Activated CD8-positive, alpha-beta T cell treated with anti-CD3 and anti-CD28 coated beads for 36 hours (primary cell): ENCODE measurements at regions of chr10 and their contacts with region 1.

Region 1: GRCh38 chr10:94320285-94320914 is 42.3 kb downstream of the NOC3L start:
- DNase-seq: peak; percentile 82
- ATAC-seq: peak; percentile 61
- H3K4me3 Mint-ChIP-seq: no peak overlapping the region
- H3K27ac Mint-ChIP-seq: no peak overlapping the region
- H3K4me1 Mint-ChIP-seq: peaks cover 3% of the 10 kb centered on the region
- H3K27me3 Mint-ChIP-seq: no peaks in the 10 kb centered on the region
- CTCF ChIP-seq: peak; percentile 94

Region 2: DNA sequence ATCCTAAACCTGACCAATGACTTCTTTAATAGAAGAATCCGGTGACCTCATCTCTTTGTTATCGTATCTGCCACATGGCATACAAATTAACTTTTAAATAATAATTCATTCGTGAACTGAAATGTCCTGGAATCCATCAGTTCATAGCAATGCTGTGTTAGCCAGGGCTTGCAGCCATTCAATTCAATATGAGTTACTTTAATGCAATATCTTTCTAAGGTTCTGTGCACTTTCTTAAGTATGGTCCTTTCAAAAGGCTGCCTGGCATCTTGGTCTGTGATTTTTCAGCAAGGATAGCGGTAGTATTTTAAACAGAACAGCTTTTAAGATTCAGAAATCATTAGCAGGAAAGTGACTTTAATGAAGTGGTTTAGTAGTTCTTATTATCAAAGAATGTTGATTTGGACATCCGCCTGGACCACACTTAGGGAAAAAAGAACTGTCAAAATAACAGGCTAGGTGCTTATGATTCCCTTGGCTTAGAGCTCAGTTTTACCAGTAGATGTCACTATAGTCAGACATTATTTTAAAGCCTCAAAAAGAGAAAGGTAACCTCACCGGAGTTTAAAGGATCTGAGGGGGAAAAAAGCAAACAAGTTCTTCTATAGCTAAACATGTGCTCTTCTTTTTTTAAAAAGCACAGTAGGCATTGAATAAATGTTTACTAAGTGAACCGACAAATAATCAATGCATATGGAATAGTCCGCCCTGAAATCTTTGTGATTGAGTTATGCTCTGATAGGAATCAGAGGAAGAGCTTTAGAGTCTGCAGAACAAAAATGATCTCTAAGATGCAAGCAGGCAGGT is 403.9 kb before region 1 on chr10:
- CTCF ChIA-PET with region 1: interaction called, 27 read pairs
- POLR2A ChIA-PET with region 1: no interaction called
- intact Hi-C with region 1: no loop called
- DNase-seq: no peak
- ATAC-seq: no peak
- H3K4me3 Mint-ChIP-seq: no peak overlapping the region
- H3K27ac Mint-ChIP-seq: no peak overlapping the region
- H3K4me1 Mint-ChIP-seq: no peaks in the 10 kb centered on the region
- H3K27me3 Mint-ChIP-seq: no peaks in the 10 kb centered on the region
- CTCF ChIP-seq: peak; percentile 43

Region 3: GRCh38 chr10:94092848-94093247 is 227.6 kb before region 1 on chr10:
- CTCF ChIA-PET with region 1: no interaction called
- POLR2A ChIA-PET with region 1: no interaction called
- intact Hi-C with region 1: no loop called
- DNase-seq: no peak
- ATAC-seq: no peak
- H3K4me3 Mint-ChIP-seq: no peak overlapping the region
- H3K27ac Mint-ChIP-seq: no peak overlapping the region
- H3K4me1 Mint-ChIP-seq: no peaks in the 10 kb centered on the region
- H3K27me3 Mint-ChIP-seq: peaks cover 6% of the 10 kb centered on the region
- CTCF ChIP-seq: no peak

Region 4: GRCh38 chr10:94287336-94287735 is 33.1 kb before region 1 on chr10:
- CTCF ChIA-PET with region 1: interaction called, 10 read pairs
- POLR2A ChIA-PET with region 1: no interaction called
- intact Hi-C with region 1: no loop called
- DNase-seq: no peak
- ATAC-seq: no peak
- H3K4me3 Mint-ChIP-seq: no peak overlapping the region
- H3K27ac Mint-ChIP-seq: no peak overlapping the region
- H3K4me1 Mint-ChIP-seq: peaks cover 1% of the 10 kb centered on the region
- H3K27me3 Mint-ChIP-seq: peaks cover 26% of the 10 kb centered on the region
- CTCF ChIP-seq: no peak

Region 5: GRCh38 chr10:94308866-94309265 is 11.5 kb before region 1 on chr10:
- CTCF ChIA-PET with region 1: interaction called, 10 read pairs
- POLR2A ChIA-PET with region 1: interaction called, 3 read pairs
- intact Hi-C with region 1: no loop called
- DNase-seq: no peak
- ATAC-seq: no peak
- H3K4me3 Mint-ChIP-seq: no peak overlapping the region
- H3K27ac Mint-ChIP-seq: no peak overlapping the region
- H3K4me1 Mint-ChIP-seq: no peaks in the 10 kb centered on the region
- H3K27me3 Mint-ChIP-seq: peaks cover 31% of the 10 kb centered on the region
- CTCF ChIP-seq: no peak

Region 6: DNA sequence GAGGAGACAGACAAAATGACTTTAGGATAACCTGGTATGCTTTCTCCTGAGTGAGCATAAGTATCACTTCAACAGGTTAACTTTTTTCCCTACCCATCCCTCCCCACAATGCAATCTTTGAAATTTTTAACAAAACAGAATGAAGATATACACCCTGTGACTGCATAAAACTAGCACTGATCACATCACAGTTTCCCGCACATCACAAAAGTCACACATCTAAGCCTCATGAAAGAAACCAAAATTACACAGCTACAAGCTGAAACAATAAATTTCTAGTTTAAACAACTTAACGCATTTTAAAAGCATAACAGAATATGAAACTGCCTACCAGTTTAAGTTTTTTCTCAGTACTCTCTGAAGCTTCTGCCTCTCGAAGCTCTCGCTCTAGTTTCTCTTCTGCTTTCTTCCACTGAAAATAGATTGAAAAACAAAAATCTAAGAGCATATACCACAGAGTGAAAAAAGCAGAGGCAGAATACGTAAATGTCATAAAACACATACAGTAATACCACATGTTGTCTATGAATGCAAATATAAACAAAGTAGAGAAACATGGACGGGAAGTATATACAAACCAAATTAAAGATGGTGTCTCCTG is 24.2 kb after region 1 on chr10:
- CTCF ChIA-PET with region 1: interaction called, 11 read pairs
- POLR2A ChIA-PET with region 1: interaction called, 3 read pairs
- intact Hi-C with region 1: no loop called
- DNase-seq: no peak
- ATAC-seq: no peak
- H3K4me3 Mint-ChIP-seq: no peak overlapping the region
- H3K27ac Mint-ChIP-seq: no peak overlapping the region
- H3K4me1 Mint-ChIP-seq: no peaks in the 10 kb centered on the region
- H3K27me3 Mint-ChIP-seq: no peaks in the 10 kb centered on the region
- CTCF ChIP-seq: no peak

Region 7: DNA sequence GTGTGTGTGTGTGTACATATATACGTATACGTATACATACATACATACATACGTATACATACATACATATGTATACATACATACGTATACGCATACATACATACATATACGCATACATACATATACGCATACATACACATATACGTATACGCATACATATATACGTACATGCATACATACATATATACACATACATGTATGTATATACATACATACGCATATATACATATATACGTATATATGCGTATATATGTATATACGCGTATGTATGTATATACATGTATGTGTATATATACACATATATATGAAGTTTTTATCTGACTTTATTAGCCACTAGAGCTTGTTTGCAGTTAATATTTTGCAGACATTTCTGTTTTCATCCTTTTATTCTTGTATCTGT is 145.3 kb after region 1 on chr10:
- CTCF ChIA-PET with region 1: no interaction called
- POLR2A ChIA-PET with region 1: no interaction called
- intact Hi-C with region 1: no loop called
- DNase-seq: no peak
- ATAC-seq: no peak
- H3K4me3 Mint-ChIP-seq: no peak overlapping the region
- H3K27ac Mint-ChIP-seq: no peak overlapping the region
- H3K4me1 Mint-ChIP-seq: no peaks in the 10 kb centered on the region
- H3K27me3 Mint-ChIP-seq: peaks cover 10% of the 10 kb centered on the region
- CTCF ChIP-seq: no peak